ENCODE measurements at regions of chr1 and their contacts with region 1.

Region 1: DNA sequence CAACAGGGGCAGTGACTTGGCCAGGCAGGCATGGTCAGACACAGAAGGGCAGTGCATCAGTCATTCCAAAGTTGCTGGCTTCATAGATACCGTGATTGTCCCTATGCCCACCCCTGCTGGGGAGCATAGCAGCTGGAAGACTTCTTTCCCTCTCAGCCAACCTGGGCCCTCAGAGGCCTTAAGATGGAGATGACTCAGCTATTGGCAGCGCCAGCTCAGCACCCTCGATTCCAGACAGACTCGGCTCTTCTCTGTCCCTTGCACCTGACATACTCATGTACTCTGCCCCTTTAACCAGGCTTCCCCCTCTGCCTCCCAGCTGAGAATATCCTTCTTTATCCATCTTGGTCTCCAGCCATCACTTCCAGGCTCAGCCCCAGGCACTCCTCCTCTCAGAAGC is 16.8 kb downstream of the SLAMF8 start:
- DNase-seq: no peak
- ATAC-seq: no peak
- H3K4me3 Mint-ChIP-seq: no peak overlapping the region
- H3K27ac Mint-ChIP-seq: no peak overlapping the region
- H3K4me1 Mint-ChIP-seq: peaks cover 5% of the 10 kb centered on the region
- H3K27me3 Mint-ChIP-seq: peaks cover 33% of the 10 kb centered on the region
- CTCF ChIP-seq: no peak

Region 2: DNA sequence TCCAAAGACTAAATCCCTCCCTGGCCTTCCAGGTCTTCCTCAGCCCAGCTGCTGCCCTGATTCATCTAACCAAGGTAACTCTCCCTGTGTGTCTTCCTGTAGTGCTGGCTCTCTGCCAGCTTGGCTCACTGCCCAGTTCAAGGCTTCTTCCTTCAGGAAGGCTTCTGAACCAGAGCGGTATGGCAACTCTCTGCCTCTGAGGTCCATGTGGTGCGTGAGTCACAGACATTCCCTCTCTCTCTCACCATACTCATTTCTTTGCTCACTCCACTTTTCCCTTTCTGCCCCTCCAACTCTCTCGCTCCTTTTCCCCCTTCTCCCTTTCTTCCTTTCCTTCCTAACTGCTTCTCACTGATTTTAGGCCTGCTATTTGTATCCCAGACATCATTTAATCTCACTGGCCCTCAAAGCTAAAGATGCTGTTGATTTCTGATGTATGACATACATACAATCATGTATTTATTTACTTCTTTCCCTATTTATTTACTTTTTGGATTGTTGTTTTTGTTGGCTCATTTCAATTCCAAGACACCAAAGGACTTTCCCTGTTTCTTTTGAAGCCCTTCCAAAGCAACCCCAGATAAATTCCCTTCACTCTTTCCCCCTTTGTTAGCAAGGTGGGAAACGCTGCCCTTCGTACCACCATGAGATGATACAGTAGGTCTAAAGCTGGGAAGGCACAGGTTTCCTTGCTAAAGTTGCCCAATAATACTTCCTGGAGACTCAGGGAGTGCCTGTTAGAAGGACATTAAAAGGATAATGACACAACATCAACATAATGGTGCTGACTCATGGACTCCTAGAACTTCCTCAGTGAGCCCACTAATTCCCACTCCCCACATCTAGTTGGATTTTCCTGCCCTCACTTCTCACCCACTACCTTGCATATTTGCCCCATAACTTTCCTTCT is 38.7 kb after region 1 on chr1:
- CTCF ChIA-PET with region 1: no interaction called
- POLR2A ChIA-PET with region 1: no interaction called
- intact Hi-C with region 1: loop called (anchors 5 kb)
- DNase-seq: no peak
- ATAC-seq: no peak
- H3K4me3 Mint-ChIP-seq: no peak overlapping the region
- H3K27ac Mint-ChIP-seq: no peak overlapping the region
- H3K4me1 Mint-ChIP-seq: no peaks in the 10 kb centered on the region
- H3K27me3 Mint-ChIP-seq: no peaks in the 10 kb centered on the region
- CTCF ChIP-seq: no peak

Measured in activated B cell treated with CpG ODN at 0.5 μM for 24 hours (primary cell).